Dorsolateral prefrontal cortex (tissue), 120 donors: ENCODE measurements at regions of chr13 and their contacts with region 1.

Region 1: GRCh38 chr13:51154029-51154555 is 43.0 kb upstream of the C13orf42 start:
- DNase-seq: no peak
- H3K4me3 ChIP-seq: no peak overlapping the region
- H3K27ac ChIP-seq: no peak overlapping the region
- H3K27me3 ChIP-seq: no peaks in the 10 kb centered on the region
- CTCF ChIP-seq: no peak

Region 2: GRCh38 chr13:49560270-49561050 is 1593.6 kb before region 1 on chr13:
- intact Hi-C with region 1: loop called in 1 of 2 experiments (anchors 10 kb)
- DNase-seq: no peak
- H3K4me3 ChIP-seq: no peak overlapping the region
- H3K27ac ChIP-seq: peak overlapping the region in 37 of 59 donors; percentile 1 to 66 (median 29)
- H3K27me3 ChIP-seq: no peaks in the 10 kb centered on the region
- CTCF ChIP-seq: peak in 31 of 56 donors; percentile 10 to 51 (median 27)

Region 3: GRCh38 chr13:51000571-51001260 is 153.4 kb before region 1 on chr13:
- intact Hi-C with region 1: no loop called
- DNase-seq: peak in 1 of 10 donors; percentile 18
- H3K4me3 ChIP-seq: no peak overlapping the region
- H3K27ac ChIP-seq: peak overlapping the region in 2 of 59 donors; percentile 7 to 37
- H3K27me3 ChIP-seq: peaks cover 0 to 3% (median 0%) of the 10 kb centered on the region in 45 donors
- CTCF ChIP-seq: no peak

Region 4: GRCh38 chr13:51425410-51426042 is 271.4 kb after region 1 on chr13:
- intact Hi-C with region 1: loop called (anchors 10 kb)
- DNase-seq: no peak
- H3K4me3 ChIP-seq: no peak overlapping the region
- H3K27ac ChIP-seq: no peak overlapping the region
- H3K27me3 ChIP-seq: no peaks in the 10 kb centered on the region
- CTCF ChIP-seq: no peak

Region 5: DNA sequence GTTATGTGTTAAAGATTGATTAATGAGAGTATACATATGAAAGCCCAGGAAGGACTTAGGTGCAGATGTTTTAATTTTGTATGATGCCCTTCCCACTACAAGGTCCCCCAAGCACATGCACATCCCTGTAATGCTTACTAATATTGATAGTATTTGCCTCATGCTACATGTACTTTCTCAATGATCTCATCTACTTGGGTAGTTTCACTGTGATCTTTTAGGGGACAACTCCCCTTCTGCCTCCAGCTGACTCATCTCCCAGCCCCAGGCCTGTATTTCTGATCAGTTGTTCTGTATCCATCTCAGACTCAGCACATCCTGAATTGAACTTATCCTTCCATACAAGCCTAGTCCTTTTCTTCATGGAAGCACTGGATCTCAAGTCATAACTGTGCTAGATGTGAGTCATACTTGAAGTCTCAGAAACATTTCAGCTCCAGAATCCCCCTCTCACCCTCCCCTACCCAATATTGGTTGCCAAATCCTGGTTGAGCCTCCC is 348.1 kb after region 1 on chr13:
- intact Hi-C with region 1: no loop called
- DNase-seq: no peak
- H3K4me3 ChIP-seq: no peak overlapping the region
- H3K27ac ChIP-seq: no peak overlapping the region
- H3K27me3 ChIP-seq: no peaks in the 10 kb centered on the region
- CTCF ChIP-seq: no peak